Calu3 (cell line): ENCODE measurements at regions of chr10 and their contacts with region 1.

Region 1: GRCh38 chr10:100346765-100347567 is at the start of gene SCD:
- DNase-seq: peak; percentile 81
- H3K4me3 Mint-ChIP-seq: peak within 1 kb of the TSS; percentile 96
- H3K27ac Mint-ChIP-seq: peak within 1 kb of the TSS; percentile 91
- H3K4me1 Mint-ChIP-seq: peaks cover 35% of the 10 kb centered on the region
- H3K27me3 Mint-ChIP-seq: no peaks in the 10 kb centered on the region
- CTCF ChIP-seq: no peak
- total RNA-seq, gene SCD: 173 and 225 TPM in 2 replicates

Region 2: DNA sequence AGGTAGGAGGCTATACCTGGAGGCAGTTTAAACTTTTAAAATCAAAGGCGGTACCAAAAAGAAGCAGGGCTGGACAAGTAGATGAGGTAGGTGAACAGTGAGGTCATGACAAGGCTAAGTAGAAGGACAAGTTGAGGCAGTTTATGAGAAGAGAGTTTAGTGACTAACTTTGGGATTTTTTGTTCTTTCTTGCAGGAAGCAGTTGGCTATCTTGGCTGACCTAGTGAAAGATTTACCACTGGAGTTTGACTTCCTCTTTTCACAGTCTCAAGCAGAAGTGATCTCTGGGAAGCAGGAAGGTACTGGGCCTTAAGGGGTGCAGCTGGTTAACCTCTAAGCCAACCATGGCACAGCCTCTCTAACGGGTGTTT is 661.4 kb before region 1 on chr10:
- CTCF ChIA-PET with region 1: no interaction called
- intact Hi-C with region 1: no loop called
- DNase-seq: no peak
- H3K4me3 Mint-ChIP-seq: no peak overlapping the region
- H3K27ac Mint-ChIP-seq: peak overlapping the region; percentile 7
- H3K4me1 Mint-ChIP-seq: no peaks in the 10 kb centered on the region
- H3K27me3 Mint-ChIP-seq: no peaks in the 10 kb centered on the region
- CTCF ChIP-seq: no peak

Region 3: DNA sequence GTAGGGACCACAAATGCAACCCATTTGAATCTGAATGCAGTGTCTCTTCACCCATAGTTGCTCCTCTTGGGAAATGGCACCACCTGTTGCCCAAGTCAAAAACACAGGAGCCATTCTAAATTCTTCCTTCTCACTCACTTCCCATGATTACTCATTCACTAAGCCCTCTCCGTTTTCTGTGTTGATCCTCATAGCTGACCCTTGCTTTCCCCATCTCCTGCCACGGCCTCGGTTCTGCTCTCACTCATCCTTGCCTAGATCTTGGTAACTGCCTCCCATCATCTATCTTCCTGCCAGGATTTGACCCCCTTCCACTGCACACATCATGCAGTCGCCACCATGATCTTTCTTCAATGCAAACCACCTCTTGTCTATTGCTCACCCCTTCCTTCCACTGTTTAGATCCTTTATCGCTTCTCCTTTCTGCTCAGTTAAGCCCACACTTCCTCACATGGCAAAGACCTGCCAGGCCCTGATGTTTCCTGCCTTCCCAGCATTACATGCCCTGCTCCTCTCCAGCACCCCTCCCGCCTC is 246.2 kb before region 1 on chr10:
- CTCF ChIA-PET with region 1: no interaction called
- intact Hi-C with region 1: no loop called
- DNase-seq: no peak
- H3K4me3 Mint-ChIP-seq: no peak overlapping the region
- H3K27ac Mint-ChIP-seq: no peak overlapping the region
- H3K4me1 Mint-ChIP-seq: peaks cover 13% of the 10 kb centered on the region
- H3K27me3 Mint-ChIP-seq: peaks cover 48% of the 10 kb centered on the region
- CTCF ChIP-seq: no peak

Region 4: GRCh38 chr10:100174699-100175677 is 172.0 kb before region 1 on chr10:
- CTCF ChIA-PET with region 1: no interaction called
- intact Hi-C with region 1: no loop called
- DNase-seq: no peak
- H3K4me3 Mint-ChIP-seq: no peak overlapping the region
- H3K27ac Mint-ChIP-seq: no peak overlapping the region
- H3K4me1 Mint-ChIP-seq: no peaks in the 10 kb centered on the region
- H3K27me3 Mint-ChIP-seq: no peaks in the 10 kb centered on the region
- CTCF ChIP-seq: no peak

Region 5: DNA sequence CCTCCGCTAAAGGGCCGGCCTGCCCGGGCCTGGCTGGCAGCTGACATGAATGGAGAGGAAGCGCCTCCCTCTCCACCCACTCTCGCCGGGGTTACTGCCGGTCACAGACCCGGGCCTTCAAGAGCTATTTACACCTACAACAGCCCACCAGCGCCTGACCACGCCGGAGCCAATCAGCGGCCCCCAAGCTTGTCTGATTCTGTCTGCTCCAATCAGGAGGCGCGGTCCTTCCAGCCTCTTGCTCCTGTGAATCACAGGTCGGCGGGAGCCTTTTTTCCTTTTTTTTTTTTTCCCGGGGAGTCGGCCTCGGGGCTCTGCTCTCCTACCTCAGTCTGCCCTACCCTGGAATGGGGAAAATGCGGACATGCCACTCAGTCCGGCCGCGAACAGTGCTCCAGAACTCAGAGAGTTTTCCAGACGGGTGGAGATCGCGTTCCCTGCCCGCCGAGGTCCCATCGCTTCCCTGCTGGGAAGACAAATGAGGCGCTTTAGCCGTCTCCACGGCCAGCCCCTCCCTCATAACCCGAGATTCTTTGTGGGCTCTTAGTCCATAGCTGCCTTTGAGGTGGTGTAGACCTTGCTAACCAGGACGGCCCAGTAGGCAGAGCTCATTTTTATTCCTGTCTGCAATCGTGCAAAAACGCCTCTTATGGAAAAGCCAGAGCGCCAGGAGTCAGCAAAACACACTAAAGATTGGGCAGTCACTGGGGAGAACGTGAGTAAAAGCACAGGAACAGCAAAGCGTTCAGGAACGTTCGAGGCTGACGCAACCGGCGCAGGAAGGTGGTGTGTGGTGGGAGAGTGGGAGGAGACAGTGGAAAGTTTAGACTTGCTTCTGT is 26.6 kb after region 1 on chr10:
- CTCF ChIA-PET with region 1: interaction called, 12 read pairs
- intact Hi-C with region 1: loop called (anchors 2 kb)
- DNase-seq: peak; percentile 94
- H3K4me3 Mint-ChIP-seq: no peak overlapping the region
- H3K27ac Mint-ChIP-seq: no peak overlapping the region
- H3K4me1 Mint-ChIP-seq: no peaks in the 10 kb centered on the region
- H3K27me3 Mint-ChIP-seq: no peaks in the 10 kb centered on the region
- CTCF ChIP-seq: no peak